ENCODE measurements at regions of chr6 and their contacts with region 1.

Region 1: GRCh38 chr6:41602864-41603608 is 35.2 kb upstream of the MDFI start:
- DNase-seq: peak; percentile 24
- ATAC-seq: peak; percentile 94
- H3K4me3 ChIP-seq: no peak overlapping the region
- H3K27ac ChIP-seq: no peak overlapping the region
- H3K4me1 ChIP-seq: no peaks in the 10 kb centered on the region
- H3K27me3 ChIP-seq: no peaks in the 10 kb centered on the region; a peak in 1 of 4 replicates
- CTCF ChIP-seq: peak; percentile 93 to 96 (median 96)
- EP300 ChIP-seq: no peak
- POLR2A ChIP-seq: no peak
- RAD21 ChIP-seq: peak; percentile 90

Region 2: GRCh38 chr6:41683510-41684310 is 80.7 kb after region 1 on chr6:
- CTCF ChIA-PET with region 1: interaction called, 38 read pairs
- POLR2A ChIA-PET with region 1: no interaction called
- RAD21 ChIA-PET with region 1: interaction called, 23 read pairs
- SMC1A ChIA-PET with region 1: interaction called, 7 read pairs
- in situ Hi-C with region 1: loop called (anchors 10 kb)
- intact Hi-C with region 1: loop called (anchors 1 kb)
- DNase-seq: no peak
- ATAC-seq: peak; percentile 93
- H3K4me3 ChIP-seq: no peak overlapping the region
- H3K27ac ChIP-seq: no peak overlapping the region
- H3K4me1 ChIP-seq: no peaks in the 10 kb centered on the region
- H3K27me3 ChIP-seq: no peaks in the 10 kb centered on the region
- CTCF ChIP-seq: peak; percentile 85 to 93 (median 92)
- EP300 ChIP-seq: no peak
- POLR2A ChIP-seq: peak; percentile 73
- RAD21 ChIP-seq: peak; percentile 72

Region 3: GRCh38 chr6:41767156-41767833 is 164.3 kb after region 1 on chr6:
- CTCF ChIA-PET with region 1: no interaction called
- POLR2A ChIA-PET with region 1: no interaction called
- RAD21 ChIA-PET with region 1: no interaction called
- SMC1A ChIA-PET with region 1: no interaction called
- in situ Hi-C with region 1: loop called (anchors 5 kb)
- intact Hi-C with region 1: no loop called
- DNase-seq: no peak
- ATAC-seq: peak; percentile 59
- H3K4me3 ChIP-seq: no peak overlapping the region
- H3K27ac ChIP-seq: no peak overlapping the region
- H3K4me1 ChIP-seq: peaks cover 9% of the 10 kb centered on the region
- H3K27me3 ChIP-seq: no peaks in the 10 kb centered on the region
- CTCF ChIP-seq: no peak
- EP300 ChIP-seq: no peak
- POLR2A ChIP-seq: no peak
- RAD21 ChIP-seq: no peak

Region 4: DNA sequence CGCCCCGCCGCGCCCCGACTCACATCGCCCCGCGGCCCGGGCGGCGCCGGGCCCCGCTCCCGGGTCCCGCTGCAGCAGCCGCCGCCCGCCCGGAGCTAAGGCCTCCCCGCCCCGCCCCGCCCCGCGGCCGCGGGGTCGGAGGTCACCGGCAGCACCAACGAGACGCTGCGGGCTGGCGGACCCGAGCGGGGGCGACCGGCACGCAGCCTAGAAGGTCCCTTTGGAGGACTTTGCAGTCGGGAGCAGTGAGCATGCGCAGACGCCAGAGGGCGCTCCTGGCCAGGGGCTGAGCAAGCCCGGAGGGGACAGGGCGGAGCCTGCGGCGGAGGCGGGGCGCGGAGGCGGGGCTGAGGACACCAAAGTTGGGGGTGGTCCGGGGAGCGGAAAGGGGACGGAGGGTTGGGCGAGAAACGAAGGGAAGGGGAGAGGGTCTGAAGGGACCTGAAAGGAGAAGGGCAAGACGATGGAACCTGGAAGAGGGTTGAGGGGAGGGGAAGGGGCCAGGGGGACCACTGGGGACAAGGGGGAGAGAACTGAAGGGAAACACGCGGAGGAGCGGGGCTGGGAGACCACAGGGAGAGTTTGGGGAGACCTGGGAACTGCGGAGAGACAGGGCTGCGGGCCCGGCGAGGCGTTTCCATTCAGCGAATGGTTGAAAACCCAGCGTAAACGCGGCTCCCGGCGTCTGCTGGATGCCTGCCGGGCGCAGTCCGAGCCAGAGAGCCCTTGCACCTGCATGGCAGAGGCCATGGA is 176.9 kb after region 1 on chr6 and contains the start of gene FRS3:
- CTCF ChIA-PET with region 1: interaction called, 17 read pairs
- POLR2A ChIA-PET with region 1: no interaction called
- RAD21 ChIA-PET with region 1: interaction called, 8 read pairs
- SMC1A ChIA-PET with region 1: interaction called, 13 read pairs
- in situ Hi-C with region 1: no loop called
- intact Hi-C with region 1: loop called (anchors 1 kb)
- DNase-seq: peak; percentile 78
- ATAC-seq: peak; percentile 95
- H3K4me3 ChIP-seq: peak within 1 kb of the TSS; percentile 74
- H3K27ac ChIP-seq: no peak within 1 kb of the TSS
- H3K4me1 ChIP-seq: peaks cover 18% of the 10 kb centered on the region
- H3K27me3 ChIP-seq: no peaks in the 10 kb centered on the region
- CTCF ChIP-seq: peak; percentile 94 to 99 (median 97); a peak in 5 of 6 replicates
- EP300 ChIP-seq: 0 out of 4 replicates have a peak, but pooled peaks of 1 of the 2 experiments have one; percentile 30
- POLR2A ChIP-seq: no peak
- RAD21 ChIP-seq: peak; percentile 97
- polyA plus RNA-seq, gene FRS3: 0.05 to 0.09 TPM